ENCODE measurements at regions of chr4 and their contacts with region 1.

Region 1: GRCh38 chr4:82284858-82285805 is 88.7 kb downstream of the HNRNPD start:
- DNase-seq: peak; percentile 96 to 99
- ATAC-seq: peak; percentile 100
- H3K4me3 ChIP-seq: peak overlapping the region; percentile 58 to 68 (median 62)
- H3K27ac ChIP-seq: peak overlapping the region; percentile 67 to 81 (median 74)
- H3K4me1 ChIP-seq: peaks cover 0 to 3% of the 10 kb centered on the region in 2 donors
- H3K27me3 ChIP-seq: no peaks in the 10 kb centered on the region
- CTCF ChIP-seq: peak; percentile 71 to 97 (median 77)
- POLR2A ChIP-seq: no peak

Region 2: GRCh38 chr4:82201805-82202641 is 83.1 kb before region 1 on chr4:
- in situ Hi-C with region 1: no loop called
- intact Hi-C with region 1: no loop called
- DNase-seq: no peak
- ATAC-seq: no peak
- H3K4me3 ChIP-seq: no peak overlapping the region
- H3K27ac ChIP-seq: no peak overlapping the region
- H3K4me1 ChIP-seq: no peaks in the 10 kb centered on the region
- H3K27me3 ChIP-seq: no peaks in the 10 kb centered on the region
- CTCF ChIP-seq: peak in 4 of 5 experiments; percentile 14 to 34 (median 24)
- POLR2A ChIP-seq: no peak

Region 3: DNA sequence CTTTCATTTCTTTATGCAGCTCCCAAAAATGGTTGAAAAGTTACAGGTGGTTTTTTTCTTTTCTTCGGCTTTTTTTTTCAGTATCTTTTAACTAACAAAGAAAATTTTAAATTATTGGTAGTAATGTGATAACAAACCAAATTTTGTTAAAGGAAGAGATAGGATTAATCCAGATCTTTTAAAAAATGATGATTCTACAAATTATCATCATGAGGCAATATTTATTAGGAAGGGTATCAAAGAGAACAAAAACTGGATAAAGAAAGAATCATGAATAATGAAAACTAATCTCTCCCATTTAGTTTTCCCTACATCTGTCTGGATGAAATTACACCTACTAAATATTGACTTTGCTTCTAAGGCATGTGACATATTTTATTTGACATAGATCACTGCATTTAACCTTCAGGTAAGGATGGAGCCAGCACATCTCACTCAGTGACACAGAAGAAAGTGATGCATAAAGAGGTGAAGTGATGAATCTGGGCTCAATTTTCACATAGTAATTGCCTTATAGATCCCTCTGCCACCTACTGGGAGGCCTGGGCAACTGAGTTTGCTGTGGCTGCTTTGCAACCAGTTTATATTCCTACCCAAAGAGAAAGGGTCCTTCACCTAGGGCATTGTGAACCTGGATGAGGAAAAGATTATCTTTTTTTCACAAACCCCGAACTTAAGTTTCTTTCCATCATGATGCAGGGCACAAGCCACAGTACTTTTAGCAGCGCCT is 67.0 kb before region 1 on chr4:
- in situ Hi-C with region 1: no loop called
- intact Hi-C with region 1: no loop called
- DNase-seq: no peak
- ATAC-seq: no peak
- H3K4me3 ChIP-seq: no peak overlapping the region
- H3K27ac ChIP-seq: no peak overlapping the region
- H3K4me1 ChIP-seq: no peaks in the 10 kb centered on the region
- H3K27me3 ChIP-seq: no peaks in the 10 kb centered on the region
- CTCF ChIP-seq: no peak
- POLR2A ChIP-seq: no peak

Region 4: DNA sequence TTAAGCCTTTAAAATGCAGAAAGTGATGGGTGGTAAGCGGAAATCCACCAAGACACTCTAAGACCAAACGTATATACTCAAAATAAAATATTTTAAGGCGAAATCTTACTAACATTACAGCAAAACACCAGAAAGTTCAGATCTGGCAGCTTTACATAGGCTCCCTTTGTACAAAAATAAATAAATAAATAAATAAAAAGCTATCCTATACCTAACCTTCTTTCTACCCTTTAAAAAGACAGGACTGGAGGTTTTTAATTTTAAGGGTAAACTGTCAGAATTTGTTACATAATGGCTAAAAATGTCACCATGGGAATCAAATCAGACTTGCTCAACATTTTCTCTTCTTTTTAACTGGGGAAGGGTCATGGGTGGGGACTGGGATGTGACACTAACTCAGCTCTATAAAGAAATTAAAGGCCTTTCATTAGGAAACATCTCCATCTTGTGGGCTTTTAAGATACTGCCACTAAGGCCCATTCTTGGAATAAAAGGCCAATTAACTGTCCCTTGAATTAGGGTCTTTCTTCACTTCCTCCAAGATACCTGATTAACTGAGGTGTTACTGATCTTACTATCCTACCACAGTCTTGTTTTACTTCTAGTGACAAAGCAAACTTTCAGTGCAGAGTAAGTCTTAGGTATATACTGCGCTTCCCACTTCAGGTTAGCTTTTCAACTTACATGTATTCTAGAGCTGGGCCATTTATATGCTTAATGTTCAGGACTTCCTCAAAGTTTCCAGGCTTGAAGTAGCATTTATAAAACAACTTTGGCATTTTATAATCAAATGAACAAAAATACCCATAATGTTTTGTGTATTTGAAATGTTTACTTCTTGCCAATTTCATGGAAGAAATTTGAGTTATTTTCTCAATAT is 75.4 kb after region 1 on chr4:
- in situ Hi-C with region 1: loop called in 1 of 4 experiments (anchors 10 kb)
- intact Hi-C with region 1: no loop called
- DNase-seq: no peak
- ATAC-seq: peak; percentile 69 to 79
- H3K4me3 ChIP-seq: no peak overlapping the region
- H3K27ac ChIP-seq: peak overlapping the region; percentile 49 to 65 (median 54)
- H3K4me1 ChIP-seq: peaks cover 90 to 94% of the 10 kb centered on the region in 2 donors
- H3K27me3 ChIP-seq: no peaks in the 10 kb centered on the region
- CTCF ChIP-seq: peak; percentile 40 to 73 (median 64)
- POLR2A ChIP-seq: no peak

Region 5: DNA sequence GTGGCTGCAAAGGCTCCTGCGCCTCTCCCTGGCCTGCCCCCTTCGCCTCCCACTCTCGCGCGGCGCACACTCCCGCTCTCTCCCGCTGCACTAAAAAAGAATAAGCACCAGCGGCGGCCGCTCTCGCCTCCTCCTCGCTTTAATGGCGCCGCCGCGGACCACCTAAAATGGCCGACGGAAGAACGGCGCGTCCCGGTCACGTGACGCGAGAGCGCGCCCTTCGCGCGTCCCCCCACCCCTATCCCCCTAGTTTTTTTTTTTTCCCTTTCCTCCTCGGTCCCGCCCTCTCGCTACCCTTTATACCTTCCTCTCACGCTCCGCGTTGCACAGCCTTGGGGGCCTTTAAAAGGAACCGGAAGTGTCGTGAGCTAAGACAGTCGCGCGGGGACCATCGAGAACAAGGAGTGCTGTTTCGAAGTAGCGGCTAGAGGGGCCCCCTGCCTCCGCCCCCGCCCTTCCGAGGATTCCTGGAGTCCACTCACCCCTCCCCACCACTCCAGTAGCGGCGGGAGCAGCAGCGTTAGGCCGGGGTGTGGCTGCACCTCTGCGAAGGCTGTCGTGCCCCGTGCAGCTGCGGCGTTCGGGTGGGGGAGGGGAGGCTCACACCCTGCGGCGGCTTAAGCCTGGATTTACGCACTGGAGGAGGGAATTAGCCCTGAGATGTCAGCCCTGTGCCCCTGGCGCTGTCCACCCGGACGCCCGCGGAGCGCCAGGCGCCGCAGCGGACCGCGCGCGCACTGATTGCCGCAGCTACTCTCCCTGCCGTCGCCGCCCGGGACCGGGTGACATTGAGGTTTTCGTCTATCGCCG is 88.9 kb after region 1 on chr4 and contains the start of gene HNRNPD:
- in situ Hi-C with region 1: loop called in 2 of 4 experiments (anchors 5 to 10 kb)
- intact Hi-C with region 1: loop called (anchors 2 kb)
- DNase-seq: peak; percentile 97 to 99
- ATAC-seq: peak; percentile 90 to 91
- H3K4me3 ChIP-seq: peak within 1 kb of the TSS; percentile 82 to 99 (median 96)
- H3K27ac ChIP-seq: peak within 1 kb of the TSS; percentile 99 to 100 (median 100)
- H3K4me1 ChIP-seq: peaks cover 42 to 44% of the 10 kb centered on the region in 2 donors
- H3K27me3 ChIP-seq: no peaks in the 10 kb centered on the region
- CTCF ChIP-seq: peak in 2 of 5 experiments; percentile 20 to 21
- POLR2A ChIP-seq: peak; percentile 92 to 95
- total RNA-seq, gene HNRNPD: 26.9 to 46.0 (median 37.4) TPM

Region 6: DNA sequence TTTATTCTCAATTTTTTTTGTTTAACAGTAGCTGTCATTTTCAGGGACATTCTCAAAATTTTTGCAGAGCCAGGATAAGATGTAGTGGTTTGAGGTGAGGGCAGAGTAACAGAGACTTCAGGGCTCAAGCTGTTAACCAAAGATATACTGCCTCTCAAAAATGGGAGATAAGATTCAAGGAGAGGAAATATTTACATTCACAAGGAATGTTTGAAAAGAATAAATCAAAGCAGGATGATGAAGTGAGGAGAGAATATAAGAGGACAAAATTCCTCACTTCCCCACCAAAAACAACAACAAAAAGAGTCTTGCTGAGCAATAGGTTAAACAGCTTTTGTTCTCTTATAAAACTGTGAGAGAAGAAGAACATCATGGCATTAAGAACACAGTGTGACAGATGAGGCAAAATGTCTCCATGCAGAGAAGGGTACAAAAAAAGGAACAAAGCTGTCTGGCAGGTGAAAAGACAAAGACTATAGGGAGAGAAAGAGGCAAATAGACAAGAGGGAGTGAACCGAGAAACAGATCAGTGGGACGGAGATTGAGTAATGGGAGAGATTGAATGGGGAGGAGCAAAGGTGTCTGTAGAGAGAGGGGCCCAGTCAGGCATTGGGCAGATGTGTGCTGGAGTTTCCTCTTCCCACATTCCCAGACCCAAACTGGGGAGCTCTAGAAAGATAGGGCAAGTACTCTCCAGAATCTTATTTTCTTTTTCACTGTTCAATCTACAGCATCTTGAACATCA is 382.8 kb after region 1 on chr4:
- in situ Hi-C with region 1: no loop called
- intact Hi-C with region 1: no loop called
- DNase-seq: no peak
- ATAC-seq: no peak
- H3K4me3 ChIP-seq: no peak overlapping the region
- H3K27ac ChIP-seq: no peak overlapping the region
- H3K4me1 ChIP-seq: no peaks in the 10 kb centered on the region
- H3K27me3 ChIP-seq: no peaks in the 10 kb centered on the region
- CTCF ChIP-seq: no peak
- POLR2A ChIP-seq: no peak

Measured in gastrocnemius medialis (tissue), 4 donors.